Dorsolateral prefrontal cortex (tissue), 120 donors: ENCODE measurements at regions of chr17 and their contacts with region 1.

Region 1: DNA sequence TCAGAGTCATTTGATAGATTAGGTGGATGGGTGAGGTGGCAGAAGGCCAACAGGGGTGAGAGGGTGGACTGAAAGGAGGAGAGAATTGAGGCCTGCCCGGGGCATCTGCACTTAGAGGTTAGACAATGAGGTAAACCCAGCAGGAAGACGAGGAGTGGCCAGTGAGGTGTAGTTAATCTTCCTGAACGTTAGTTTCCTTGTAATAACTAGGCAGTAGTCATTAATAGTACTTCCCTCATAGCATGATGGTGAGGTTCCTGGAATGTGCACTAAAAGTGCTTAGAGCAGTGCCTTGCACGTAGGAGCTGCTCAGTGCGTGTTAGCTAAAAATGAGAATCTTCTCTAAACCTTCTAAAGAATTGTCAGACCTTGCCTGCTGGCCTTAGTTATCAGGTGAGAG is 13.5 kb upstream of the KSR1 start:
- DNase-seq: peak in 1 of 10 donors; percentile 0
- H3K4me3 ChIP-seq: no peak overlapping the region
- H3K27ac ChIP-seq: no peak overlapping the region
- H3K27me3 ChIP-seq: no peaks in the 10 kb centered on the region
- CTCF ChIP-seq: no peak

Region 2: GRCh38 chr17:27407916-27408846 is 34.5 kb before region 1 on chr17:
- intact Hi-C with region 1: no loop called
- DNase-seq: peak in 2 of 10 donors; percentile 12 to 19
- H3K4me3 ChIP-seq: no peak overlapping the region
- H3K27ac ChIP-seq: no peak overlapping the region
- H3K27me3 ChIP-seq: no peaks in the 10 kb centered on the region
- CTCF ChIP-seq: no peak

Region 3: GRCh38 chr17:27494192-27495091 is 51.7 kb after region 1 on chr17:
- intact Hi-C with region 1: loop called in 1 of 2 experiments (anchors 5 kb)
- DNase-seq: peak in 6 of 10 donors; percentile 40 to 68 (median 56)
- H3K4me3 ChIP-seq: peak overlapping the region in 44 of 59 donors; percentile 1 to 56 (median 26)
- H3K27ac ChIP-seq: peak overlapping the region in 58 of 59 donors; percentile 21 to 88 (median 73)
- H3K27me3 ChIP-seq: no peaks in the 10 kb centered on the region
- CTCF ChIP-seq: peak in 53 of 56 donors; percentile 20 to 80 (median 58)